CD8-positive, alpha-beta memory T cell (primary cell): ENCODE measurements at regions of chr11 and their contacts with region 1.

Region 1: DNA sequence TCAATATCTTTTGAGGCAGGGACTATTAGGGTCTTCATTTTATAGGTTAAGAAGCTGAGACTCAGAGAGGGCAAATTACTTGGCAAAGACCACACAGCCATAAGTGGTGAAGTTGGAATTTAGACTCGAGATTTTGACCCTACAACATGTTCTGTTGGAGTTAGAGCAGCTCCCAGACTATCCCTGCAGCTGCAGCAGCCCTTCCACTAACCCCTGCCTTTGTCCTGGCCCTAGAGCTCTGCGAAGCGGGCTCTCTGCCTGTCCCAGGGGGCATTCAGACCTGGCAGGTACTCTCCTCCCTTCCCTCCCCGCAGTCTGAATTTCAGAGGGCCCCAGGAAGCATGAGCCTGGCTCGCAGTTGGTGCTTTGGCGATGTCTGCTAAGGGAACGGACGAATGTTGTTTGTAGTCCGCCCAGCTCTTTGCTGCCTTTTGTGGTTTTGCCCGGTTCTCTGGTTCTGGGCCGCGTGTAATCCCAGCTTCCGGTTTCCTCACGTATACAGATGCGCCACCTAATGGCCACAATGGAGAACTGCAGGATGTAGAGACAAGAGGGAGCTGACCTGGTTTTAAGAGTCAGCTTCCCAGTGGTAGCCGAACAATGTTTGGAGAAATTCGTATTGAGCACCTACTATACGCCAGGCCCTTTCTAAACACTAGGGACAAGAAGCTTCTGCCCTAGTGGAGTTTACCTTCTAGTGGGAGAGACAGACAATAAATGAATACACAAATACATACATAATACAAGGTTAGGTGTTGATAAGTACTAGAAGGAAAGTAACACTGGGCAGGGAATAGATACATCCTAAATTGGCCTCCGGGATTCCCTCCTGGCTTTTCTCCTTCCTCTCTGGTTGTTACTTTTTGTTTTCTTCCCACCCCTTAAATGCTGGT is 125.2 kb downstream of the ST3GAL4 start:
- DNase-seq: peak; percentile 37 to 79 (median 65)
- H3K4me3 ChIP-seq: peak overlapping the region; percentile 10
- H3K4me3 Mint-ChIP-seq: peak overlapping the region in 6 of 7 donors; percentile 14 to 79 (median 72)
- H3K27ac ChIP-seq: no peak overlapping the region
- H3K27ac Mint-ChIP-seq: peak overlapping the region in 6 of 8 donors; percentile 12 to 86 (median 80)
- H3K4me1 ChIP-seq: peaks cover 10% of the 10 kb centered on the region
- H3K4me1 Mint-ChIP-seq: peaks cover 15 to 28% (median 25%) of the 10 kb centered on the region in 3 donors
- H3K27me3 ChIP-seq: no peaks in the 10 kb centered on the region
- H3K27me3 Mint-ChIP-seq: peaks cover 5% of the 10 kb centered on the region in 2 donors

Region 2: DNA sequence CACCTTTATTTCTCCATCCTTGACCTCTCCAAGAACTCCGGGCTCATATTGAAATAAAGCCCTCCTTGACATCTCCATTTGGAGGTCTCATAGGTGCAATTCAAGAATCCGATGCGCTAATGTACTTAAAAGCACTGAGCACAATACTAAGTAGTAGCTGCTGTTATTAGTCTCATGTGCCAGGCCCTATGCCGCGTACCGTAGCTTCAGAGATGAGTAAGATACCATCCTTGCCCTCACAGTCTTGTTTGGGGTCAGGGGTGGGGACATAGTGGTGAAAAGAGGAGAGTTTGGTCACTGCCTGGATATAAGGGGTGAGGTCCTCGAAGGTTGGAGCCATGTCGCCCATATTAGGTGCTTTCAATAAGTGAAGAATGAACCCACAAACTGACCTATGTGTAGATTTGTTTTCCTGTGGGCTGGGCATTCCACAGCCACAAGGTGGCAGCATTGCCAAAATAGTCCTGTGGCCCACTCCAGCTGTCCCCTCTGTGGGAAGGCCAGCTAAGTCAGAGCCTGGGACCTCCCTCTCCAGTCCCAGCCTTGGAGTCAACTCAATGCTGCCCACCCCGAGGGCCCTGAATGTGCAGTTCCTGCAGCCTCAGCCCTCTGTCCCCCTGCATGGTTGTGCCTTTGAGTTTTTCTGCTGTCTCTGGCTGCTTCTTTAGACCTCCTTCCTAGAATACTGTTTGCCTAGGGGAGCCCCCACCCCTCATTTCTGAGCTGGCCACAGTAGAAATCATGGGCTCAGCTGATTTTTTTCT is 170.2 kb before region 1 on chr11:
- CTCF ChIA-PET with region 1: interaction called, 39 read pairs
- POLR2A ChIA-PET with region 1: interaction called, 4 read pairs
- DNase-seq: peak; percentile 41 to 70 (median 45)
- H3K4me3 ChIP-seq: no peak overlapping the region
- H3K4me3 Mint-ChIP-seq: peak overlapping the region in 1 of 7 donors; percentile 12
- H3K27ac ChIP-seq: no peak overlapping the region
- H3K27ac Mint-ChIP-seq: peak overlapping the region in 5 of 8 donors; percentile 11 to 69 (median 35)
- H3K4me1 ChIP-seq: peaks cover 19% of the 10 kb centered on the region
- H3K4me1 Mint-ChIP-seq: peaks cover 29 to 47% (median 39%) of the 10 kb centered on the region in 3 donors
- H3K27me3 ChIP-seq: no peaks in the 10 kb centered on the region
- H3K27me3 Mint-ChIP-seq: no peaks in the 10 kb centered on the region

Region 3: DNA sequence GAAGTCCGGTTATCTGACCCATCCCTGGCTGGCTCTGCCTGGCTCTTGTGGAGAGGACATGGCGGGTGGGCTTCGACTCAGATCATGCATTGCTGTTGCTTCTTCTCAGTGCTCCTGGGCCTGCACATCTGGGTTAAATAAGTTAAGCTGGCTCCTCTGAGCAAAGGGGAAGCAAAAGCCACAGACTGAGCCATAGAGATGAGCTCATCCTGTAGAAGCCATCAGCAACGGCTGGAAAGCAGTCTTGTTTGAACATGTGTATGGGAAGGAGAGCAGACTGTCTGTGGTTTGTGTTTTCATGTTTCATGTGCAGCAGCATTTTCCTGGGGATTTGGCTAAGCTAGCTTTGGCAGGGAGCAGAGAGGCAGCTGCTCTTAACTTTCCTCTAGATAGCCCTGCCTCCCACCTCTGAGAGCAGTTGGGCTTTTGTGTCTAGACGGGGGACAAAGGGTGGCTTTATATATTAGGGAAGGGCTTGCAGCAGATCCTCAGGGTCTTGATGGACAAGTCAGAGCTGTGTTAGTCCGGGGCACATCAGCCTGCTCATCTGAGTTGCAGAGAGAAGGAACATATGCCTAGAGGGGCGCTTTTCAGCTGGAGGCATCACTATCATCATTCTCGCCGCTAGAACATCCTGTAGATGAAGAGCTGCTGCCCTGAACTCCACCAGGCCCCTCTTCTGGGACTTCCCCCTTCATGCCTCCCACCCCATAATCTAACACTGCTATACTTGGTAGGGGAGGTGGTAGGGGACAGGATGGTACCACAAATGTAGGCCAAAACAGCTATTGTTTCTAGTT is 161.9 kb before region 1 on chr11:
- CTCF ChIA-PET with region 1: interaction called, 36 read pairs
- POLR2A ChIA-PET with region 1: no interaction called
- DNase-seq: peak in 2 of 5 donors; percentile 13 to 20
- H3K4me3 ChIP-seq: peak overlapping the region; percentile 41
- H3K4me3 Mint-ChIP-seq: peak overlapping the region; percentile 21 to 87 (median 63)
- H3K27ac ChIP-seq: peak overlapping the region; percentile 46
- H3K27ac Mint-ChIP-seq: peak overlapping the region; percentile 74 to 98 (median 93)
- H3K4me1 ChIP-seq: peaks cover 26% of the 10 kb centered on the region
- H3K4me1 Mint-ChIP-seq: peaks cover 42 to 53% (median 43%) of the 10 kb centered on the region in 3 donors
- H3K27me3 ChIP-seq: no peaks in the 10 kb centered on the region
- H3K27me3 Mint-ChIP-seq: no peaks in the 10 kb centered on the region

Region 4: GRCh38 chr11:126440792-126441514 is 39.7 kb before region 1 on chr11:
- CTCF ChIA-PET with region 1: interaction called, 90 read pairs
- POLR2A ChIA-PET with region 1: no interaction called
- DNase-seq: peak; percentile 51 to 75 (median 59)
- H3K4me3 ChIP-seq: no peak overlapping the region
- H3K4me3 Mint-ChIP-seq: no peak overlapping the region
- H3K27ac ChIP-seq: no peak overlapping the region
- H3K27ac Mint-ChIP-seq: peak overlapping the region in 1 of 8 donors; percentile 12
- H3K4me1 ChIP-seq: no peaks in the 10 kb centered on the region
- H3K4me1 Mint-ChIP-seq: peaks cover 4 to 6% (median 4%) of the 10 kb centered on the region in 3 donors
- H3K27me3 ChIP-seq: no peaks in the 10 kb centered on the region
- H3K27me3 Mint-ChIP-seq: peaks cover 3 to 23% of the 10 kb centered on the region in 2 donors

Region 5: DNA sequence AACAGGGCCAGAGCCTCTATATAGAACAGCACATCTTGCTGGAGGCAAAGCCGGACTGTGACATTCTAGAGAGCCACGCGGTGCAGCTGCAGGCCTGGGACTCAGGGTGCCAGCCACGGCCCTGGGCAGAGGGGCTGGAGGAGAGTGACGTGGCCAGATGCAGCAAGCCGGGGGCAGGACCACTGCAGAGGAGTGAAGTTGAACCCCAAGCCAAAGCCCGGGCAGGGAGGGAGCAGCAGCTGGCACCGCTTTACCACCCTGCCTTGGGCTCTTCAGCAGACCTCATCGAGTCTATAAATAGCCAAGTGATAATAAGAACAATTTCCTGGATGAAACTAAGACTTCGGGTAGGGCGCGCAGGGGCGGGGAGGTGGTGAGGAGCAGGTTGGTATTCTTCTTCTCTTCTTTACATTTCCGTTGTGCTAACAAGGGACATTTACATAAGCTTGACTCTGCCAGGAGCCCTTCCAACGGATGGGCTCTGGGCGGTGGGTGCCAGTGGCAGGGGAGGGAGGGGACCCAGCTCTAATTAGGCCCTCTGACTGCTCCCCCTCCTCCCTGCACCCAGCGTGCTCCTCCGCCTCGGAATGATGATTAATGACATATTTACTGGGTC is 15.0 kb before region 1 on chr11:
- CTCF ChIA-PET with region 1: interaction called, 59 read pairs
- POLR2A ChIA-PET with region 1: no interaction called
- DNase-seq: peak in 1 of 5 donors; percentile 18
- H3K4me3 ChIP-seq: no peak overlapping the region
- H3K4me3 Mint-ChIP-seq: peak overlapping the region in 6 of 7 donors; percentile 37 to 64 (median 56)
- H3K27ac ChIP-seq: no peak overlapping the region
- H3K27ac Mint-ChIP-seq: peak overlapping the region; percentile 6 to 95 (median 52)
- H3K4me1 ChIP-seq: peaks cover 14% of the 10 kb centered on the region
- H3K4me1 Mint-ChIP-seq: peaks cover 16 to 25% (median 21%) of the 10 kb centered on the region in 3 donors
- H3K27me3 ChIP-seq: no peaks in the 10 kb centered on the region
- H3K27me3 Mint-ChIP-seq: peaks cover 3 to 12% of the 10 kb centered on the region in 2 donors

Region 6: DNA sequence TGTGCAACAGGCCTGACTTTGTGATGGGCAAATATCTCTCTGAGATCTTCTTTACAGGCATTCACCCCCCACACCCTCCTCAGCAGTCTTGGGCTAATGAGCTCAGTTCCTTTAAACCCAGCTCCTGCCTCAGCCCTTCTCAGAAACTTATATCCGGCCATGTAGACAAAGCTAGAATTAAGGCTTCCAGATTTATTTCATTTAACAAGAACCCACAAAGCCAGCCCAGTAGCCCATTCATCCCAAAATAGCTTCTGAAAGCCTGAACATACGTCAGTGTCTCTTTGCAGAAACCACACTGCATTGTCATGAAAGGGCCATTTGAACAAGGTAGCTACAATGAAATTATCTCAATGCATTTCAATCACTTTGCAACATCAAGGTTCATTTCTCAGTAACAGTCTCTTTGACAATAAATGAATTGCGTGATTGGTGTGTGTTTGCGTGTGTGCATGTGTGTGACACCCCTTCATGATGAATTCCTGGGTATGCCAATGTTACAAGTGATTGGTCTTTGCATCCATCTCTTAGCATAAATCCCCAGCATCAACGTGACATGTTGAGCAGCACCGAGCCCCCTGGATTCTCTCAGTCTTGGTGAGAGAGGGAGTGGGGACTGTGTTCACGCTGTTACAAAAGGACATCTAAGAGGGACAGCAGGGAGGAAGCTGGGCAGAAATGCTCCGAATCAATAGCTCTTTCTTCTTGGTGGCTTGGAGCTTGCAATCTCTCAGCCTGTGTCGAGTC is 220.3 kb after region 1 on chr11:
- CTCF ChIA-PET with region 1: no interaction called
- POLR2A ChIA-PET with region 1: no interaction called
- DNase-seq: no peak
- H3K4me3 ChIP-seq: no peak overlapping the region
- H3K4me3 Mint-ChIP-seq: no peak overlapping the region
- H3K27ac ChIP-seq: no peak overlapping the region
- H3K27ac Mint-ChIP-seq: no peak overlapping the region
- H3K4me1 ChIP-seq: no peaks in the 10 kb centered on the region
- H3K4me1 Mint-ChIP-seq: no peaks in the 10 kb centered on the region
- H3K27me3 ChIP-seq: no peaks in the 10 kb centered on the region
- H3K27me3 Mint-ChIP-seq: peaks cover 0 to 10% of the 10 kb centered on the region in 2 donors